Activated CD4-positive, alpha-beta memory T cell treated with anti-CD3 and anti-CD28 coated beads for 36 hours (primary cell): ENCODE measurements at regions of chr3 and their contacts with region 1.

Region 1: DNA sequence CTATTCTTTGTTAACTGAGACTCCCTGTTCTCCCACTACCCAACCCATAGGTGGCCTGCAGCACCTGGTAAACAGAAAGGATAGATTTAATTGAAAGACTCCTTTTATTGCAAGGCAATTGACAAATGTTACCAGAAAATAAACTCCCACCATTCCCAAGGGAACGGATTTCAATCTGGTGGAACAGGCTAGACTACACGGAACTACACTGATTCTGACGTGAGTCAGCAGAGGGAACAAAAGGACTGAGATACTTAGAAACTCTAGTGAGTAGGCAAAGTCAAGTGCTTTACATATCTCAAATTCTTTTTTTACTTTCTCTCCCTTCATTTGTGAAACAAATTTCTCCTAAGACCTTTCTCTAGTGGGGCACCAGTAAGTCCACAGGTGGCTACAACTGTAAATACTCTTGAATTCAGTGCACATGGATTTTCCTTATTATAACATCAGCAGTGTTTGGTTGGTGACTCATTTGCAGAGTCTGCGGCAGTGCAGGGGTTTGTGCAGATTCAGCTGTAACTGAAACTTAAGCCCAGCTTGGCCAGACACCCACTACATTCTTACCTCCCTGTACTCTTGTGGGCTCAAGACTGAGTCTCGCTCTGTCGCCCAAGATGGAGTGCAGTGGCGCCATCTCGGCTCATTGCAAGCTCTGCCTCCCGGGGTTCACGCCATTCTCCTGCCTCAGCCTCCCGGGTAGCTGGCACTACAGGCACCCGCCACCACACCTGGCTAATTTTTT is 34.3 kb upstream of the PLSCR2 start:
- DNase-seq: peak; percentile 51
- H3K4me3 Mint-ChIP-seq: no peak overlapping the region
- H3K27ac Mint-ChIP-seq: no peak overlapping the region
- H3K4me1 Mint-ChIP-seq: peaks cover 16% of the 10 kb centered on the region
- H3K27me3 Mint-ChIP-seq: no peaks in the 10 kb centered on the region

Region 2: DNA sequence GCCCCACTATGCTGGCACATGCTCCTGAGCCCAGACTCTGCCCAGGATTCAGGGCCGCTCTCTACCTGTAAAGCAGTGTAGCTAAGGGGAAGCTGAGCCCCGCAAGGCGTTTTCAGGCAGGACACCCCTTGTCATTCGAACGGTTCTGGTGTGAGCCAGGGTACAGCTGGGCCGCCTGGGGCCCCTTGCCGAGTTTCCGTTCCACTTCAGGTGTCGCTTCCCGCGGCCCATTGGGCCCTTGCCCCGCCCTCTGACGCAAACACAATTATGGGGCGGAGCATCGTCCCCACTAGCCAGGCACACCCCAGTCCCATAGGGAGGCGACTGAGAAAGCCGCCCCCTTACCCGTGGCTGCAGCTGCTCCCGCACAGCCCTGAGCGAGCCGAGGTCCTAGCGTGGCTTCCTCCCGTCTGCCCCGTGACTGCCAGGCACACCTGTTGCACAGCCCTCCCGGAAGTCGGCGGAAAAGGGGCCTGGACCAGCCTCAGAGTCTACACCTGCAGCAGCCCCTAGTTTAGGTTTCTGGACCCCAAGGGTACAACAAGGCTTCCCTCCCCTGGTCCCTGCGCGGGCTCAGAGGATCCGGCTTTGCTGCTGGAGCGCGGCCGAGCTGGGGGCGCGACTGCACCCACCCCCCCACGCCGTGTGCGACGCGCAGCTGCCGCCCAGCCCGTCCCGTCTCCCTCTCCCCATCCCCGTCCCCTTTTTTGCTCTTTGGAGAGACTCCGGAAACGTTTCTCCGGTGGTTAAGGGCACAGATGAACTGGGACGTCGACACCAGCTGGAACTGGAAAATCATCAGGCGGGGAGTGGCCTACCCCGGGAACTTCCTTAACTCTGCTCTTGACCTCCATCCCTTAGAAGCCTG is 34.2 kb before region 1 on chr3 and contains the start of gene PLSCR2:
- CTCF ChIA-PET with region 1: no interaction called
- POLR2A ChIA-PET with region 1: no interaction called
- intact Hi-C with region 1: loop called (anchors 2 kb)
- DNase-seq: peak; percentile 81
- H3K4me3 Mint-ChIP-seq: peak within 1 kb of the TSS; percentile 71
- H3K27ac Mint-ChIP-seq: peak within 1 kb of the TSS; percentile 28
- H3K4me1 Mint-ChIP-seq: peaks cover 3% of the 10 kb centered on the region
- H3K27me3 Mint-ChIP-seq: no peaks in the 10 kb centered on the region
- total RNA-seq, gene PLSCR2: not detected

Region 3: GRCh38 chr3:146953511-146953981 is 449.9 kb after region 1 on chr3:
- CTCF ChIA-PET with region 1: no interaction called
- POLR2A ChIA-PET with region 1: no interaction called
- intact Hi-C with region 1: no loop called
- DNase-seq: no peak
- H3K4me3 Mint-ChIP-seq: no peak overlapping the region
- H3K27ac Mint-ChIP-seq: no peak overlapping the region
- H3K4me1 Mint-ChIP-seq: no peaks in the 10 kb centered on the region
- H3K27me3 Mint-ChIP-seq: no peaks in the 10 kb centered on the region